ENCODE measurements at regions of chr12 and their contacts with region 1.

Region 1: DNA sequence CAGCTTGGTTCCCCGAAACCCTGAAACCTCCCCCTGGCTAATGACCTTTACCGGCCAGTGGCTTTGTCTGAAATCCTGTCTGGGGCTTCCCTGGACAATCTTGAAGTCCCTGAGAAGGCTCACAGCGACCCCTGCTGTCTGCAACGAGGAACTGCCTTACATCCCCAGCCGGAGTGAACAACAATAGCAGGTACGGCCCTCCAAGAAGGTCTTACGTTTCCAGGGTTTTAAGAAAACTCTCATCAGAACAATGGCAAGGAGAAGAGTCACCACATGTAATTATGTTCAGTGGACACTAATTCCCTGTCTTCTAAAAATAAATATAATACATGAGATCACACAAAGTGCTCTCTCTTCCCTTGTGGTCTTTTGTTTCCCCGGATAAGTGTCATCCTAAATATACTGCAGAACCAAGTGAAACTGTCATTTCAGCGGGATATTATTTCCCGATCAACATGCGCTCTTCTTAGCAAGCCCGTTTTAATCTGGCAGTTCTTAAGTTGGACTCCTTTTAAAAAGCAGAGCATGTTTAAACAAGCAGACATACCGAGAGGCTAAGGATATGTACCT is 53.3 kb downstream of the RBM19 start:
- DNase-seq: peak; percentile 53 to 81 (median 75)
- ATAC-seq: peak; percentile 60 to 68
- H3K4me3 ChIP-seq: no peak overlapping the region
- H3K27ac ChIP-seq: no peak overlapping the region
- H3K4me1 ChIP-seq: no peaks in the 10 kb centered on the region
- H3K27me3 ChIP-seq: no peaks in the 10 kb centered on the region

Region 2: GRCh38 chr12:113439606-113440030 is 473.2 kb before region 1 on chr12:
- intact Hi-C with region 1: loop called in 1 of 4 experiments (anchors 5 kb)
- DNase-seq: peak; percentile 43 to 72 (median 71)
- ATAC-seq: peak; percentile 37 to 48
- H3K4me3 ChIP-seq: no peak overlapping the region
- H3K27ac ChIP-seq: no peak overlapping the region
- H3K4me1 ChIP-seq: no peaks in the 10 kb centered on the region
- H3K27me3 ChIP-seq: no peaks in the 10 kb centered on the region

Region 3: GRCh38 chr12:113462117-113462774 is 450.6 kb before region 1 on chr12:
- intact Hi-C with region 1: loop called (anchors 1 to 5 kb)
- DNase-seq: peak; percentile 81 to 94 (median 93)
- ATAC-seq: peak; percentile 84 to 88
- H3K4me3 ChIP-seq: peak overlapping the region; percentile 33
- H3K27ac ChIP-seq: no peak overlapping the region
- H3K4me1 ChIP-seq: peaks cover 4% of the 10 kb centered on the region
- H3K27me3 ChIP-seq: peaks cover 2% of the 10 kb centered on the region

Region 4: DNA sequence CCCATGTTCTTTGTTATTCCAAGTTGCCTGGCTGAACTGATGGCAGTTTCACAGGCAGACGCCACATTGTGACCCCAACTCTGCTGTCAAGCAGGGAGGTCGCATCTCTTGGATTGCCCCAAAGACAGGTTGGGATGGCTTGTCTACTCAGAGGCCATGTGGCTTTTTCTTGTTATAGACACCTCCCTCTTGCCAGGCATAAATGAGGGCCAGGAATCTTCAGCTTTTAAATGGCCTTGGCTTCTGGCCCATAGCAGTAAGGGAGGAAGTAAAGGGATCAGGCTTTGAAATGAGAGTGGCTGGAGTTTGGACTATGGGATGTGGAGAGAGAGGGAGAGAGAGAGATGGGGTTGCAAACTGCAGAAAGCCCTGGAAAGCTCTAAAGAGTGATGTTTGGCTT is 278.1 kb after region 1 on chr12:
- intact Hi-C with region 1: no loop called
- DNase-seq: peak in 1 of 3 donors; percentile 40
- ATAC-seq: peak; percentile 50 to 74
- H3K4me3 ChIP-seq: no peak overlapping the region
- H3K27ac ChIP-seq: no peak overlapping the region
- H3K4me1 ChIP-seq: peaks cover 1% of the 10 kb centered on the region
- H3K27me3 ChIP-seq: no peaks in the 10 kb centered on the region